MCF 10A (cell line): ENCODE measurements at regions of chr6 and their contacts with region 1.

Region 1: GRCh38 chr6:31619805-31620585 is 520 bp upstream of the PRRC2A start:
- DNase-seq: peak; percentile 99
- H3K4me3 Mint-ChIP-seq: peak overlapping the region; percentile 76
- H3K27ac Mint-ChIP-seq: peak overlapping the region; percentile 89
- H3K4me1 Mint-ChIP-seq: peaks cover 17% of the 10 kb centered on the region
- H3K27me3 Mint-ChIP-seq: no peaks in the 10 kb centered on the region
- CTCF ChIP-seq: no peak

Region 2: GRCh38 chr6:31632279-31632946 is 12.4 kb after region 1 on chr6:
- CTCF ChIA-PET with region 1: interaction called, 5 read pairs
- POLR2A ChIA-PET with region 1: interaction called, 50 read pairs
- intact Hi-C with region 1: no loop called
- DNase-seq: no peak
- H3K4me3 Mint-ChIP-seq: no peak overlapping the region
- H3K27ac Mint-ChIP-seq: no peak overlapping the region
- H3K4me1 Mint-ChIP-seq: no peaks in the 10 kb centered on the region
- H3K27me3 Mint-ChIP-seq: no peaks in the 10 kb centered on the region
- CTCF ChIP-seq: no peak

Region 3: GRCh38 chr6:31639449-31639861 is 19.5 kb after region 1 on chr6:
- CTCF ChIA-PET with region 1: interaction called, 5 read pairs
- POLR2A ChIA-PET with region 1: interaction called, 50 read pairs
- intact Hi-C with region 1: no loop called
- DNase-seq: no peak
- H3K4me3 Mint-ChIP-seq: no peak overlapping the region
- H3K27ac Mint-ChIP-seq: no peak overlapping the region
- H3K4me1 Mint-ChIP-seq: no peaks in the 10 kb centered on the region
- H3K27me3 Mint-ChIP-seq: no peaks in the 10 kb centered on the region
- CTCF ChIP-seq: no peak